T-cell (primary cell): ENCODE measurements at regions of chr17 and their contacts with region 1.

Region 1: DNA sequence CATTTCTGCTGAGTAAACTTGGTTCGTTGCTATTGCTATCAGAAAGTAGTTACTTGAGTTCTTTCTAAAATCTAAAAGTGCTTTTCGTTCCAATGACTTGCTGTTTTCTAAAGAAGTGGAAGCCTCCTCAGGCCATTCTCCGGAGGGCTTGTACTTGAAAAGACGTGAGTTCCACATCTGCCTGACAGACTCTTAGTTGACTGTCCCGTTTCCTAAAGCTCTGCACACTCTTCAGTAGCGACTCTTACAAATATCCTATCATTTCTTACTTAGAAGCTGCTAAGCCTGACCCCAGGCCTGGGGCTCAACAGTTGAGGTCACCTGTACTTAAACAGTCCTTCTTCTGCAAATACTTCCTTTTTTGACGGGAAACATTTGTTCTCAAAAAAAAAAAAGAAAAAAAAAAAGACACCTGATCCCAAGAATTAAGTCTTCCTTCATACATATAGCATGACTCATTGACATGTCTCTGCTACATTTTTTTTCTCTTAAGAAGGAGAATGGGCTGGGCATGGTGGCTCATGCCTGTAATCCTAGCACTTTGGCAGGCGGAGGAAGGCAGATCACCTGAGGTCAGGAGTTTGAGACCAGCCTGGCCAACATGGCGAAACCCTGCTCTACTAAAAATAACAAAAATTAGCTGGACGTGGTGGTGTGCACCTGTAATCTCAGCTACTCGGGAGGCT is 61.5 kb downstream of the DHRS7C start:
- DNase-seq: no peak
- ATAC-seq: no peak
- H3K4me3 ChIP-seq: no peak overlapping the region
- H3K4me3 Mint-ChIP-seq: no peak overlapping the region
- H3K27ac ChIP-seq: no peak overlapping the region
- H3K27ac Mint-ChIP-seq: no peak overlapping the region
- H3K4me1 ChIP-seq: no peaks in the 10 kb centered on the region
- H3K4me1 Mint-ChIP-seq: no peaks in the 10 kb centered on the region
- H3K27me3 ChIP-seq: peaks cover 0 to 19% of the 10 kb centered on the region in 2 experiments
- H3K27me3 Mint-ChIP-seq: peaks cover 4 to 5% of the 10 kb centered on the region in 2 donors

Region 2: DNA sequence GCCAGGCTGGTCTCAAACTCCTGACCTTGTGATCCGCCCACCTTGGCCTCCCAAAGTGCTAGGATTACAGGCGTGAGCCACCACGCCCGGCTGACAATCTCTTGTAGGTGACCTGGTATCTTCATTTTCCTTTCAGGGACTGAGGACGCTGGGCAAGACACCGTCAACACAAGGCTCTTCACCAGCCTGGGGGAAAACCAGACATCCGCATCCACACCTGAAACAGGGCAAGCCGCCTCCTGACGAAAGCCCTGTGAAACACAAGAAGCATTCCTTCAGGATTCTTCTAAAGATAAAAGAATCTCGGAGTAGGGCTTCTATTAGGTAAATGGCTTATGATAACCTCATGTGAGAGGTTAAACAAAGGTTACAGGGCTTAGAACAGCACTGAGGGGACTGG is 13.2 kb after region 1 on chr17:
- CTCF ChIA-PET with region 1: interaction called in 1 of 2 experiments, 11 read pairs
- POLR2A ChIA-PET with region 1: no interaction called
- DNase-seq: no peak
- ATAC-seq: no peak
- H3K4me3 ChIP-seq: no peak overlapping the region
- H3K4me3 Mint-ChIP-seq: no peak overlapping the region
- H3K27ac ChIP-seq: no peak overlapping the region
- H3K27ac Mint-ChIP-seq: no peak overlapping the region
- H3K4me1 ChIP-seq: no peaks in the 10 kb centered on the region
- H3K4me1 Mint-ChIP-seq: no peaks in the 10 kb centered on the region
- H3K27me3 ChIP-seq: peaks cover 2 to 16% of the 10 kb centered on the region in 2 experiments
- H3K27me3 Mint-ChIP-seq: peaks cover 14 to 19% of the 10 kb centered on the region in 2 donors